Naive thymus-derived CD8-positive, alpha-beta T cell (primary cell): ENCODE measurements at regions of chr1 and their contacts with region 1.

Region 1: DNA sequence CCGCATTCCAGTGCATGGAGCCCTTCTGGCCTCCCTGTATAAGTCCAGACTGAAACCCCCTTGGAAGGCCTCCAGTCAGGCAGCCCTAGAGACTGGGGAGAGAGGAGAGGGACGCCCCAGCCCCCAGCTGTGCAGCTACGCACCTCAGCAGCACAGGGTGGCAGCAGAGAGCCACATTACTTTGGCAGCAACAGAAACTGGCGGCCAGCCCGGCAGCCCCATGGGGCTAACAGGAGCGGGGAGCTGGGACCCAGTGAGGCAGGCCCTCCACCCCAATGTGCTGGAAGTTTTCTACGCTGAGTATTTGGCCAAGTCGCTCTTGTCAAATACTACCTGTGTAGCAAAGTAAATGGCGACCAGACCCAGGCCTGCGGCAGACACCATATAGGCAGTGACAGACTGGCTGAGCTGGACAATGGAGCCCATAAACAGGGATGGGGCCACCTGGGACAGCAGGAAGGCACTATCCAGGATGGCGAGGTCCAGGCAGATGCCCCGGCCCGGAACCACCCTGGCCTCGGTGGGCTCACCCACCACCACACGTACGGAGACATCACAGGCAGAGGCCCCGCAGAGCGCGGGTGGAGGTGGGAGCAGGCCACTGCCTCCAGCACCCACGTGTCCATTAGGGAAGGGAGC is 21.2 kb downstream of the SLC45A3 start:
- DNase-seq: peak; percentile 57 to 84 (median 69)
- ATAC-seq: peak; percentile 95 to 98
- H3K4me3 Mint-ChIP-seq: no peak overlapping the region
- H3K27ac Mint-ChIP-seq: peak overlapping the region in 1 of 10 donors; percentile 38
- H3K4me1 Mint-ChIP-seq: peaks cover 0 to 7% (median 5%) of the 10 kb centered on the region in 4 donors
- H3K27me3 Mint-ChIP-seq: peaks cover 0 to 1% (median 0%) of the 10 kb centered on the region in 5 donors

Region 2: DNA sequence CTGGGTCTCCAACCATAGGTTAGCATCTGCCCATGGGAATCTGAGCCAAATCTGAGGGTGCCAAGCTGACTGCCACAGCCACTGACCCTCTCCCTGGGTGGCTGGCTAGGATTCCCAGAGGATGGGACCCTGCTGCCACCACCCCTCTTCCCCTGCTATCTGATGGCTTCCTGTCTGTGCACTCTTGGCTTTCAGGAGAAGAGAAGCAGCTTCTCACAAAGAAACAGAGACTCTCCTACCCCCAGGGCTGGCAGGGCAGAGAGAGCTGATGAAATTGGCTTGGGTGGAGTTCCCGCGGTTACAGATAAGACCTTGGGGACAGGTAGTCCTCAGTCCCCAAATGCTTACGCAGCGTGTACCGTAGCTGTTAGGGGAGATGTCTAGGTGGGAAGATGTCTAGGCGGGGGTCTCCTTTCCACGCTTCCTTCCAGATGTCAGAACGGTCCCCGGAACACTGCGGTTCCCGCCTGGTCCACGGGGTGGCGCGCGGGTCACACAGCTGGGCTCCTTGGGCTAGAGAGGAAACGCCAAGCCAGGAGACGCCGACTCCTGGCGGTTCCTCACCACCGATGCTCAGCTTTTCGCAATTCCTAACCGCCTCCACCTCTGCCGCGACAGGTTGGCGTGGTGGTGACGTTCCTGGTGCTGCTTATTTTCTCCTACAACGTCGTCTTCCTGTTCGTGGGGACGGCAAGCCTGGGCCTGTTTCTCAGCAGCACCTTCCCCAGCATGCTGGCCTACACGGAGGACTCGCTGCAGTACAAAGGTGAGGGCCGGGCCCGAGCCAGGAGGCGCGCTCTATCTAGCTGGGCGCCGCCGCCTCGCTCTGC is 67.3 kb before region 1 on chr1:
- POLR2A ChIA-PET with region 1: interaction called, 42 read pairs
- DNase-seq: peak; percentile 82 to 97 (median 90)
- ATAC-seq: peak; percentile 79 to 85
- H3K4me3 Mint-ChIP-seq: peak overlapping the region; percentile 84 to 96 (median 93)
- H3K27ac Mint-ChIP-seq: peak overlapping the region; percentile 93 to 98 (median 96)
- H3K4me1 Mint-ChIP-seq: peaks cover 35 to 57% (median 53%) of the 10 kb centered on the region in 4 donors
- H3K27me3 Mint-ChIP-seq: no peaks in the 10 kb centered on the region

Region 3: DNA sequence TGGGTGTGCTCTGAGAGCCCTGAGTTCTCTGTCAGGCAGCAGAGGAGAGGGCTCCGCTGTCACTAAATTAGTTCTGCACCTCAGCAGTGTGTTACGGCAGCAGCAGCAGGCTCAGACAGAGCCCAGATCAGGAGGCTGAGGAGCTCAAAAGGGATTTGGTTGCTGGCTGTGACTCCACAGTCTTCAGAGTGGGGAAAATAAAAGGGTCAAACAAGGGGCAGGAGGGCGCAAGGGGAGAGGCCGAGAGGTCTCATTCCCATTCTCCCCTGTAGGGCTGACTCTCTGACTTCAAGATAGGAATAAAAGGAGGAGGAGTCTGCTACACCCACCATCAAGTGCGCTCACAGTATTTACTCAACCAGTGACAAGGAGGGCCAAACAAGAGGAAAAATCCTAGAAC is 30.4 kb after region 1 on chr1:
- POLR2A ChIA-PET with region 1: no interaction called
- DNase-seq: no peak
- ATAC-seq: no peak
- H3K4me3 Mint-ChIP-seq: no peak overlapping the region
- H3K27ac Mint-ChIP-seq: no peak overlapping the region
- H3K4me1 Mint-ChIP-seq: peaks cover 3 to 14% (median 7%) of the 10 kb centered on the region in 4 donors
- H3K27me3 Mint-ChIP-seq: peaks cover 6 to 35% (median 17%) of the 10 kb centered on the region in 5 donors